BJ (cell line): ENCODE measurements at regions of chr1 and their contacts with region 1.

Region 1: GRCh38 chr1:156797212-156797871 is 19.3 kb downstream of the SH2D2A start:
- DNase-seq: no peak
- H3K4me3 ChIP-seq: no peak overlapping the region
- H3K27me3 ChIP-seq: no peaks in the 10 kb centered on the region
- CTCF ChIP-seq: peak; percentile 85

Region 2: GRCh38 chr1:156717275-156717805 is 80.0 kb before region 1 on chr1:
- CTCF ChIA-PET with region 1: no interaction called
- POLR2A ChIA-PET with region 1: no interaction called
- DNase-seq: no peak
- H3K4me3 ChIP-seq: no peak overlapping the region
- H3K27me3 ChIP-seq: no peaks in the 10 kb centered on the region
- CTCF ChIP-seq: no peak

Region 3: GRCh38 chr1:156781585-156782186 is 15.7 kb before region 1 on chr1:
- CTCF ChIA-PET with region 1: interaction called, 60 read pairs
- POLR2A ChIA-PET with region 1: no interaction called
- DNase-seq: no peak
- H3K4me3 ChIP-seq: no peak overlapping the region
- H3K27me3 ChIP-seq: no peaks in the 10 kb centered on the region
- CTCF ChIP-seq: no peak

Region 4: GRCh38 chr1:156813750-156814570 is 16.6 kb after region 1 on chr1:
- CTCF ChIA-PET with region 1: interaction called, 10 read pairs
- POLR2A ChIA-PET with region 1: no interaction called
- DNase-seq: no peak
- H3K4me3 ChIP-seq: peak overlapping the region; percentile 12; the same call in 1 of the 2 replicates
- H3K27me3 ChIP-seq: no peaks in the 10 kb centered on the region; the same call in 1 of the 2 replicates
- CTCF ChIP-seq: peak; percentile 75

Region 5: GRCh38 chr1:156868341-156868740 is 71.0 kb after region 1 on chr1:
- CTCF ChIA-PET with region 1: interaction called, 290 read pairs
- POLR2A ChIA-PET with region 1: no interaction called
- DNase-seq: no peak
- H3K4me3 ChIP-seq: no peak overlapping the region
- H3K27me3 ChIP-seq: peaks cover 9% of the 10 kb centered on the region
- CTCF ChIP-seq: no peak

Region 6: DNA sequence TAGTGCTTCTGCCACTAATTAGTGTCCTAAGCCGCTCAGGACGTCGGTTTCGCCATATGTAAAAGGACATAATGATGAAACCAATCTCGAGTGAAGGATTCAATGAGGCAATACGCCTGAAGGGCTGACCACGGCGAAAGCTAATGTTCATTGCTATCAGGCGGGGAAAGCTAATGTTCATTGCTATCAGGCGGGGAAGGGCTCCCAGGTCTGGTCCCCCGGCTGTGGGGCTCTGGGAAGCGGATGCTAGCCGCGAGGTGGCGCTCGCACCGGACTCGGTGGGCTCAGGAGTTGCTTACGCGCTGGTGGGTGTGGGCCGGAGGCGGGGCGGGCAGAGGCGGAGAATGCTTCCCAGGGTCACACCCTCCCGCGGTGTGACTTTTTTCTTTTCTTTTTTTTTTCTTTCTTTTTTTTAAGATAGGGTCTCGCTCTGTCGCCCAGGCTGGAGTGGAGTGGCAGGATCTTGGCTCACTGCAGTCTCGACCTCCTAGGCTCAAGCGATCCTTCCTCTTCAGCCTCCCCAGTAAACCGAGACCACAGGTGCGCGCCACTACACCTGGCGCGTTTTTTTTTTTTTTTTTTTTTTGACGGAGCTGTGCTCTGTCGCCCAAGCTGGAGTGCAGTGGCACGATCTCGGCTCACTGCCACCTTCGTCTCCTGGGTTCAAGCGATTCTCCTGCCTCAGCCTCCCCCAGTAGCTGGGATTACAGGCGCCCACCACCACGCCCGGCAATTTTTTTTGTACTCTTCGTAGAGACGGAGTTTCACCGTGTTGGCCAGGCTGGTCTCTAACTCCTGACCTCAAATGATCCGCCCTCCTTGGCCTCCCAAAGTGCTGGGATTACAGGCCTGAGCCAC is 95.1 kb after region 1 on chr1:
- CTCF ChIA-PET with region 1: interaction called, 160 read pairs
- POLR2A ChIA-PET with region 1: no interaction called
- DNase-seq: no peak
- H3K4me3 ChIP-seq: peak overlapping the region; percentile 16
- H3K27me3 ChIP-seq: peaks cover 2% of the 10 kb centered on the region; the same call in 1 of the 2 replicates
- CTCF ChIP-seq: peak; percentile 91

Region 7: GRCh38 chr1:156927215-156928042 is 130.1 kb after region 1 on chr1:
- CTCF ChIA-PET with region 1: interaction called, 26 read pairs
- POLR2A ChIA-PET with region 1: no interaction called
- DNase-seq: no peak
- H3K4me3 ChIP-seq: peak overlapping the region; percentile 32
- H3K27me3 ChIP-seq: peaks cover 12% of the 10 kb centered on the region
- CTCF ChIP-seq: peak; percentile 89

Region 8: DNA sequence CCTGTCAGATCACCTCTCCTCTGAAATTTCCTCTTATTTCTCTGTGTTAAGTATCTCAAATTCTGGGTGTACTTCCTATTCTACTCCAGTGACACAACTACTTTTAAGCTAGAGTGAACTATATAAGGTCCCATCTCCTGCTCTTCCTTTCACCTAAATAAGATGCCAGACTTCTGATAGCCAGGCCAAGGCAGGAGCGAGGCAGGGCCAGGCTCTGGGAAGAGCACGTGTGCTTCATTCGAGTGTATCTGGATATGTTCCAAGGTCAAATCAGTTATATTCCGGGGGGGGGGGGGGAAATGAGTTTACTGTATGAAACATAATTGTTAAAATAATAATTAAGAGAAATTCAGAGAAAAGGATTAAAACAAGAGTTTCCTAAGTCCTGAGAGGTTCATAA is 183.2 kb after region 1 on chr1:
- CTCF ChIA-PET with region 1: no interaction called
- POLR2A ChIA-PET with region 1: no interaction called
- DNase-seq: no peak
- H3K4me3 ChIP-seq: no peak overlapping the region
- H3K27me3 ChIP-seq: no peaks in the 10 kb centered on the region
- CTCF ChIP-seq: no peak

Region 9: GRCh38 chr1:157000686-157001085 is 203.3 kb after region 1 on chr1:
- CTCF ChIA-PET with region 1: no interaction called
- POLR2A ChIA-PET with region 1: interaction called, 13 read pairs
- DNase-seq: no peak
- H3K4me3 ChIP-seq: no peak overlapping the region
- H3K27me3 ChIP-seq: no peaks in the 10 kb centered on the region
- CTCF ChIP-seq: no peak